ENCODE measurements at regions of chr5 and their contacts with region 1.

Region 1: GRCh38 chr5:77867194-77867691 is 91.1 kb upstream of the TBCA start:
- DNase-seq: peak; percentile 27
- H3K4me3 Mint-ChIP-seq: no peak overlapping the region
- H3K27ac Mint-ChIP-seq: no peak overlapping the region
- H3K4me1 Mint-ChIP-seq: no peaks in the 10 kb centered on the region
- H3K27me3 Mint-ChIP-seq: no peaks in the 10 kb centered on the region
- CTCF ChIP-seq: peak; percentile 26

Region 2: DNA sequence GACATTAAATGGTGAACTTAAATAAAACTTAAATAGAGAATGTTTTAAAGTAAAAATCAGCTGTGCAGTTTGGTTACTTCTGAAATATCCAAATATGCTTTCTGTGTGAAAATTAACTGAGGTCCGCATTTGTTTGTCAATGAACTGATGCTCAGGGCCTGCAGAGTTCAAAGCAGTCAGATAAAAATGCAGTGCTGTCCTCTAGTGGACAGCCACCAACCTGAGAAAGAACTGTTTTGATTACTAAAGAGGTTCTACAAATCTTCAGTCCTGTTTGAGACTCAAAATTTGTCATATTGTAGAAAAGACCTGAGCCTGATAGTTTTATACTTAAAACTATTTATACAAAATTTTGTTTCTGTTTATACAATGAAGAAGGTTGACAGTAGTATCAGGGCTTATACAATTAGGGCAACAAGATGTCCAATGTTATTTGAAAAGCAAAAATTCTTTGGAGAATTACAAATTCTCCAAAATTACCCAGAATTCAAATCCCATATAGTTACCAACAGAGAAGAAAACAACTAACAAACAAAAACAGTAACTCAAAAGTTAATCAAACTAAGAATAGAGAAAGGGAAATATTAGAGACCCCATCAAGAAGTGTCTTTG is 141.2 kb after region 1 on chr5:
- CTCF ChIA-PET with region 1: interaction called, 4 read pairs
- POLR2A ChIA-PET with region 1: no interaction called
- intact Hi-C with region 1: loop called (anchors 1 kb)
- DNase-seq: peak; percentile 54
- H3K4me3 Mint-ChIP-seq: no peak overlapping the region
- H3K27ac Mint-ChIP-seq: no peak overlapping the region
- H3K4me1 Mint-ChIP-seq: no peaks in the 10 kb centered on the region
- H3K27me3 Mint-ChIP-seq: no peaks in the 10 kb centered on the region
- CTCF ChIP-seq: peak; percentile 83

Region 3: GRCh38 chr5:78300464-78301045 is 433.3 kb after region 1 on chr5:
- CTCF ChIA-PET with region 1: no interaction called
- POLR2A ChIA-PET with region 1: no interaction called
- intact Hi-C with region 1: loop called (anchors 2 kb)
- DNase-seq: peak; percentile 38
- H3K4me3 Mint-ChIP-seq: no peak overlapping the region
- H3K27ac Mint-ChIP-seq: no peak overlapping the region
- H3K4me1 Mint-ChIP-seq: peaks cover 5% of the 10 kb centered on the region
- H3K27me3 Mint-ChIP-seq: no peaks in the 10 kb centered on the region
- CTCF ChIP-seq: peak; percentile 31